PC-9 (cell line): ENCODE measurements at regions of chr11 and their contacts with region 1.

Region 1: DNA sequence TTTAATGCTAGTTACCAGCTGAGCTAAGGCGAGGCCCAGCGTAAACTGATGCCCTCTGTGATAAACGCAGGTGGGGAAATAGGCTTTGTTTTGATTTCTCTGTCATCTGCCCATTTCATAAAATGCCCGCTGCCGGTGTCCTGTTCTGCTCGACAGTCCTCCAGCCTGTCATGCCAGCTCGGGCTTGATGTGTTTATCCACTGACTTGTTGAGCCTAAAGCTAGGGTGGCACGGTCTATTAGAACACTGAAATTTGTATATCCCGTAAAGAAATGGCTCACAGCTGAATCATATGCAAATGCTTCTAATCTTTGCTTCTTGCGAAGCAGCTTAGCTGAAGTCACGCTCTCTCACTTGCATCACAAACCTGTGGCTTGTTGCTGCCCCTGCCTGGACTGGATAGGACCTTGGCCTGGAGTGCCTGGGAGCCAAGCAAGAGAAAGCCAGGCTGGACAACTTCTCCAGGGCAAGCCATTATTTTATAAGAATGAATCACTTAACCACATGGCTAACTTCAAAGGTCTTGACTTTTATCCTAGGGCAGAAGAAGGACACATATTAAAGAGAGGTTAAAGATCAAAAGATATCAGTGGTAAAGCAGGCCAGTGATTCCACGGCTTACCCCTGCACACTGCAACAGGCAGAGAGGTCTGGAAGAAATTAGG is 33.1 kb downstream of the EHF start:
- DNase-seq: peak; percentile 89 to 100
- H3K4me3 ChIP-seq: peak overlapping the region; percentile 16; the same call in 1 of the 2 replicates
- H3K27ac ChIP-seq: peak overlapping the region; percentile 95
- H3K4me1 ChIP-seq: peaks cover 71% of the 10 kb centered on the region
- H3K27me3 ChIP-seq: no peaks in the 10 kb centered on the region
- CTCF ChIP-seq: peak; percentile 20; the same call in 1 of the 2 replicates

Region 2: GRCh38 chr11:34044664-34045485 is 609.1 kb before region 1 on chr11:
- CTCF ChIA-PET with region 1: no interaction called
- POLR2A ChIA-PET with region 1: no interaction called
- intact Hi-C with region 1: no loop called
- DNase-seq: peak; percentile 86 to 96
- H3K4me3 ChIP-seq: peak overlapping the region; percentile 49
- H3K27ac ChIP-seq: peak overlapping the region; percentile 97
- H3K4me1 ChIP-seq: peaks cover 20% of the 10 kb centered on the region
- H3K27me3 ChIP-seq: no peaks in the 10 kb centered on the region
- CTCF ChIP-seq: no peak

Region 3: DNA sequence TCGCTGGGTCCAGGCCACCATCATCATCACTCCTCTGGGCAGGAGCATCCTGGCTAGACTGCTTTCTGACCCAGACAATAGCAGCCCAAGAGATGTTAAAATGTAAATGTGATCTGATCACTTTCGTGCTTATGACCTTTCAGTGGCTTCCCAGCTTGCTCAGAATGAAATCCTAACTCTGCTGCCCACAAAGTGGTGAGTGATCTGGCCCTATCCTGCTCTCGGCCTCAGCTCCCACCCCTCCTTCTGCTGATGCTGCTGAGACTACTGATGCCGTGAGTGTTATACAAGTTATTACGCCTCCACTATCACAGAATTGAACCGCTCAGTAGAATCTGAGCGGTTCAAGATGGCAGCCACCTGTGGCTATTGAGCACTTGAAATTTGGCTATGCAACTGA is 166.5 kb before region 1 on chr11:
- CTCF ChIA-PET with region 1: no interaction called
- POLR2A ChIA-PET with region 1: no interaction called
- intact Hi-C with region 1: no loop called
- DNase-seq: no peak
- H3K4me3 ChIP-seq: no peak overlapping the region
- H3K27ac ChIP-seq: no peak overlapping the region
- H3K4me1 ChIP-seq: no peaks in the 10 kb centered on the region
- H3K27me3 ChIP-seq: no peaks in the 10 kb centered on the region
- CTCF ChIP-seq: no peak

Region 4: GRCh38 chr11:34501500-34501899 is 152.5 kb before region 1 on chr11:
- CTCF ChIA-PET with region 1: no interaction called
- POLR2A ChIA-PET with region 1: interaction called, 4 read pairs
- intact Hi-C with region 1: loop called (anchors 2 kb)
- DNase-seq: peak; percentile 78 to 96
- H3K4me3 ChIP-seq: peak overlapping the region; percentile 19; the same call in 1 of the 2 replicates
- H3K27ac ChIP-seq: peak overlapping the region; percentile 93
- H3K4me1 ChIP-seq: peaks cover 49% of the 10 kb centered on the region
- H3K27me3 ChIP-seq: no peaks in the 10 kb centered on the region
- CTCF ChIP-seq: no peak

Region 5: GRCh38 chr11:34585735-34586487 is 68.0 kb before region 1 on chr11:
- CTCF ChIA-PET with region 1: interaction called, 5 read pairs
- POLR2A ChIA-PET with region 1: no interaction called
- intact Hi-C with region 1: loop called (anchors 1 kb)
- DNase-seq: peak in 1 of 2 experiments; percentile 64
- H3K4me3 ChIP-seq: no peak overlapping the region
- H3K27ac ChIP-seq: peak overlapping the region; percentile 4; the same call in 1 of the 2 replicates
- H3K4me1 ChIP-seq: peaks cover 35% of the 10 kb centered on the region
- H3K27me3 ChIP-seq: no peaks in the 10 kb centered on the region
- CTCF ChIP-seq: peak; percentile 94

Region 6: DNA sequence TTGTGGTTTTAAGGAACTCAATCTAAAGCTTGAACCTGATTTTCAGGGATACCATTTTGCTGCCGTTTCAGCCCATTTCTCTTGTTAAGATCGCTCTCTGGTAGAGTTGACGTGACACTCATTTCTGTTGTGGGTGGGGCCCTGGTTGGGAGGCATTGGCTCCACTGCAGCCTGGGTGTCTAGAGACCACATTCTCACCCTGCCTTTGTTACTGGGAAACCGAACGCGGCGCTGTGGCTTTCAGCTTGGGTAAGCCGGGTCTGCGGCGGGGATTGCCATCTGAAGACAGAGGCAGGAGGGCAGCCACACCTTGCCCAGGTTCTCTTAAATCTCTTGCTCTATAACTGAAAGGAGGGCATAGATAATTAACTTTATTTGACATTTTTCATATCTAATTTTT is 29.9 kb before region 1 on chr11:
- CTCF ChIA-PET with region 1: interaction called, 3 read pairs
- POLR2A ChIA-PET with region 1: interaction called, 5 read pairs
- intact Hi-C with region 1: loop called (anchors 1 kb)
- DNase-seq: peak; percentile 79 to 80
- H3K4me3 ChIP-seq: peak overlapping the region; percentile 89
- H3K27ac ChIP-seq: peak overlapping the region; percentile 96
- H3K4me1 ChIP-seq: peaks cover 67% of the 10 kb centered on the region
- H3K27me3 ChIP-seq: no peaks in the 10 kb centered on the region
- CTCF ChIP-seq: peak; percentile 27; the same call in 1 of the 2 replicates

Region 7: GRCh38 chr11:34640050-34640923 is 13.7 kb before region 1 on chr11:
- CTCF ChIA-PET with region 1: interaction called, 16 read pairs
- POLR2A ChIA-PET with region 1: interaction called, 26 read pairs
- intact Hi-C with region 1: loop called (anchors 1 kb)
- DNase-seq: peak; percentile 92 to 100
- H3K4me3 ChIP-seq: peak overlapping the region; percentile 38; the same call in 1 of the 2 replicates
- H3K27ac ChIP-seq: peak overlapping the region; percentile 84
- H3K4me1 ChIP-seq: peaks cover 98% of the 10 kb centered on the region
- H3K27me3 ChIP-seq: no peaks in the 10 kb centered on the region
- CTCF ChIP-seq: no peak

Region 8: DNA sequence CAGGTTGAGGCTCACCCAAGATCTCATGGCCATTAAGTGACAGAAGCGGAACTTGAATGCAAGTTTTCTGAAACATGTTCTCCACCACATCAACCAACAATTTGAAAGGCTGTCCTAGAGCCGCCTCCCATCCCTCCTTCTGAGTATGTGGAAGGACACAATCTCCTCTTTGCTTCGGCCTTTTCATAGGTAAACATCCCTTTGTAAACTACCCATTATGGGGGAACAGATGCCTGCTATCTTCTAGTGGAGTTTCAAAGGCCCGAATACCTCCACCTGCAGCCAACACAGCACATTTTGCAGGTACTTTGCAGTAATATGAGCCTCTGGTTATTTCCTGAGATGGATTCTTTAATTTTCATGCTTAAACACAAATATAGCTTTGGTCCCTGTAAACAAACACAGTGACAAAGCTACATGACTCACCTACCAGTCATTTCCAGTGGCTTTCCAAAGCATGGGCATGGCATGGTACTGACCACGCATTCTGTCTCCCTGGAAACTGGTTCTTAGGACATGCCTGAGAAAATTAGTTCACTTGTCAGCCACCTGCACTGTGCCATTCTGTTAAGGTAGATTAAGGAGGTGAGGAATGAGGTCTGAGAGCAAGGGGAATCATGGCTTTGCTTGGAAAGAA is 27.1 kb after region 1 on chr11:
- CTCF ChIA-PET with region 1: interaction called, 5 read pairs
- POLR2A ChIA-PET with region 1: no interaction called
- intact Hi-C with region 1: loop called (anchors 1 kb)
- DNase-seq: peak; percentile 85 to 99
- H3K4me3 ChIP-seq: no peak overlapping the region
- H3K27ac ChIP-seq: peak overlapping the region; percentile 86
- H3K4me1 ChIP-seq: peaks cover 60% of the 10 kb centered on the region
- H3K27me3 ChIP-seq: no peaks in the 10 kb centered on the region
- CTCF ChIP-seq: no peak

Region 9: DNA sequence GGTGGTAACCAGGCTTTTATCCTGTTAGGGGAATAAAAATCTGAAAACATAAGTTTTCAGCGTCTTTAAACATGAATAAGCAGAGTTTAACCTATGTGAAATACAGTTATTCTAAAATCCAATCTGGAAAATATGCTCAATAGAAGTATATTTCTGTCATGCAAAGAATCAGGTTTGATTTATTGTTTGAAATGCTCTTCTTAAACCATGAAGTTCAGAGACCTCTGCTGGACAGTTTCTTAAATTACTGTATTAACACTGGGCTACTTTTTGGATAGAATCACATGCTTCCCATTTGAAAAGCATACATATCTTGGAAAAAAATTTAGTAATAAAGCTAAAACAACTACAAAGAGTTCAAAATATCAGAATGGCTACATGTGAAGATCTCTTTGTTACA is 236.9 kb after region 1 on chr11:
- CTCF ChIA-PET with region 1: interaction called, 3 read pairs
- POLR2A ChIA-PET with region 1: interaction called, 9 read pairs
- intact Hi-C with region 1: loop called (anchors 1 kb)
- DNase-seq: peak in 1 of 2 experiments; percentile 64
- H3K4me3 ChIP-seq: no peak overlapping the region
- H3K27ac ChIP-seq: no peak overlapping the region
- H3K4me1 ChIP-seq: peaks cover 37% of the 10 kb centered on the region
- H3K27me3 ChIP-seq: no peaks in the 10 kb centered on the region
- CTCF ChIP-seq: peak; percentile 86